ENCODE measurements at regions of chr2 and their contacts with region 1.

Region 1: DNA sequence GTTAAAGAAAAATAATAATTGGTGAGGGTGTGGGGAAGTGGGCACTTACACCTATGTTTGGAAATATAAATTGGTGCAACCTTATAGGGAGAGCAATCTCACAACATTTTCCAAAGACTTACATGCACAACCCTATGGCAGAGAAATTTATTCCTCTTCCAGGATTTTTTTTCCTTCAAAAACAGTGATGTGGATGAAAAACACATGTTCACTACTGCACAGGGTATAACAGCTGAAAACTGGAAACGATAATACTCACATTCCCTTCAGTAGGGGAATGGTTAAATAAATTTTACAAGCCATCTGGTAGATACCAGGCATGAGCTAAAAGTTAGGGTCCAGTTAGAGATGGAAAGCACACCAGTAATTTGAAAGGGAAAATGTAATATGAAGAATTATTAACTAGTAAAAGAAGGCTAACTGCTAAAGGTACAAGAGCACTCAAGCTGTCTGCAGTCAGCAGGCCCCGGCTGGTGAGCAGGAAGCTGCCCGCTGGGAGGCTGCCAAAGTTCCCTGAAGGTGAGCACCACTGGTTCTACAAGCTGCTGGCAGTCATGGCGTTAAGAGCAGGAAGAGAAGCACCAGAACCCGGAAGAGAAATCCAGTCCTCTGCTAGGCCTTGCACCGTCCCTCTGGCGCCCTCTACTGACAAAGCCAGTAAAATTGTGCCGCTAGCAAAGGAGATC is 28.4 kb upstream of the CASP8 start:
- DNase-seq: peak; percentile 97
- H3K4me3 Mint-ChIP-seq: peak overlapping the region; percentile 78
- H3K27ac Mint-ChIP-seq: peak overlapping the region; percentile 91
- H3K4me1 Mint-ChIP-seq: peaks cover 47% of the 10 kb centered on the region
- H3K27me3 Mint-ChIP-seq: no peaks in the 10 kb centered on the region

Region 2: DNA sequence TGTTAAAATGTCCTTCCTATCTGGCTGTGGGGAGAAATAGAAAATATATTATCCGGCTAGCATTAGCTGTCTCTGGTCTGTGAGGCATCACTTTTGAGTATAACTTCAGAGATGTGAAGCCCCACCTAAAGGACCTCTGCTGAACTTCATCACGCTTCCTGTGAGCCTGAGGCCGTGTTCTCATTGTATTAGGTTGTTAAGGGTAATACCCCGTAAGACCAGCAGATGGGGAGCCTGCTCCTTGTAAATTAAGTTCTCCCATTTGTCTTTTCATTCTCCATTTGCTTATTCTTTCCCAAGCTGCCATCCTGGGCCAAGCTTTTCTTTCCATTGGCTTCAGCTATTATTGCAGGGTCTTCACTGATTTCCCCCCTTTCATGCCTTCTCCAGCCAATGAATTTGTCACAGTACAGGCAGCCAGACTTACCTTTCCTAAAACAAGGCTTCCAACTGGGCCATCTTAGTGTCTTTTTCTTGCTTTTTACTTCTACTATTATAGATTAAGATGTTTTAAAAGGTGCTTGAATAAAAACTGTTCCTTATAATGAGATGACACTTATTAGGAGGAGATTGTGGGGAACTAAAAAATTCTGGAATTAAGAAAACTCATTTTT is 330.4 kb before region 1 on chr2:
- intact Hi-C with region 1: loop called (anchors 1 kb)
- DNase-seq: peak; percentile 92
- H3K4me3 Mint-ChIP-seq: no peak overlapping the region
- H3K27ac Mint-ChIP-seq: peak overlapping the region; percentile 61
- H3K4me1 Mint-ChIP-seq: peaks cover 19% of the 10 kb centered on the region
- H3K27me3 Mint-ChIP-seq: no peaks in the 10 kb centered on the region

Region 3: DNA sequence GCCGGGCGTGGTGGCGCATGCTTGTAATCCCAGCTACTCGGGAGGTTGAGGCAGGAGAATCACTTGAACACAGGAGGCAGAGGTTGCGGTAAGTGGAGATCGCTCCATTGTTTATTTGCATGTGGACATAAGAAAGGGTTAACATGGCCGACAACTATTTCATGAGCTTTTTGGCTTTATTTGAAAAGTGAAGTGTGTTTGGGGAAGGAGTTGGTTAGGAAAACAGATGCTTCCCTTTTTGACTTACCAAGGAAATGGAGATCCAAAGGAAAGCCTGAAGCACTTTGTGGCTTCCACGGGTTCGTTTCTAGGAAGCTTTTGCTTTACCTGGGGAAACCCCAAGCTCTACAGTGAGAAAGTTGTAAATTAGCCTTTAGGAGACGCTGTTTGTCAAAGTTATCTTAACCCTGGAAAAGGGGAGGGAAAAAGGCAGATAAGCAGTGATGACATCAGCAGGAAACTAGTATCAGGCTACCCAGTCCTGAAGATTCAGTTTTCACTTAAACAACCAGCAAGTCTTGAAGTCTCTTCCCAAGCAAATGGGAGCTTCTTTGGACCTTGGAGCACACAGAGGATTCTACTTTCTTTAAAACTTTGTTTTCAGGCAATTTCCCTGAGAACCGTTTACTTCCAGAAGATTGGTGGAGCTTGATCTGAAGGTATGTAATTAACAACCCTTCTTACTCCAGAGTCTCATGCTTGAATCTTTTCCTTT is 49.1 kb before region 1 on chr2 and contains the start of gene CASP10:
- intact Hi-C with region 1: loop called (anchors 1 kb)
- DNase-seq: peak; percentile 87
- H3K4me3 Mint-ChIP-seq: peak within 1 kb of the TSS; percentile 98
- H3K27ac Mint-ChIP-seq: peak within 1 kb of the TSS; percentile 95
- H3K4me1 Mint-ChIP-seq: peaks cover 49% of the 10 kb centered on the region
- H3K27me3 Mint-ChIP-seq: no peaks in the 10 kb centered on the region
- total RNA-seq, gene CASP10: 12.7 and 13.1 TPM in 2 replicates

Region 4: GRCh38 chr2:201279079-201279478 is 47.2 kb after region 1 on chr2:
- intact Hi-C with region 1: loop called (anchors 2 kb)
- DNase-seq: no peak
- H3K4me3 Mint-ChIP-seq: no peak overlapping the region
- H3K27ac Mint-ChIP-seq: peak overlapping the region; percentile 80
- H3K4me1 Mint-ChIP-seq: peaks cover 22% of the 10 kb centered on the region
- H3K27me3 Mint-ChIP-seq: no peaks in the 10 kb centered on the region

Region 5: GRCh38 chr2:201642579-201643215 is 410.8 kb after region 1 on chr2:
- intact Hi-C with region 1: loop called (anchors 2 kb)
- DNase-seq: peak; percentile 97
- H3K4me3 Mint-ChIP-seq: peak overlapping the region; percentile 84
- H3K27ac Mint-ChIP-seq: peak overlapping the region; percentile 87
- H3K4me1 Mint-ChIP-seq: peaks cover 14% of the 10 kb centered on the region
- H3K27me3 Mint-ChIP-seq: peaks cover 3% of the 10 kb centered on the region

Region 6: DNA sequence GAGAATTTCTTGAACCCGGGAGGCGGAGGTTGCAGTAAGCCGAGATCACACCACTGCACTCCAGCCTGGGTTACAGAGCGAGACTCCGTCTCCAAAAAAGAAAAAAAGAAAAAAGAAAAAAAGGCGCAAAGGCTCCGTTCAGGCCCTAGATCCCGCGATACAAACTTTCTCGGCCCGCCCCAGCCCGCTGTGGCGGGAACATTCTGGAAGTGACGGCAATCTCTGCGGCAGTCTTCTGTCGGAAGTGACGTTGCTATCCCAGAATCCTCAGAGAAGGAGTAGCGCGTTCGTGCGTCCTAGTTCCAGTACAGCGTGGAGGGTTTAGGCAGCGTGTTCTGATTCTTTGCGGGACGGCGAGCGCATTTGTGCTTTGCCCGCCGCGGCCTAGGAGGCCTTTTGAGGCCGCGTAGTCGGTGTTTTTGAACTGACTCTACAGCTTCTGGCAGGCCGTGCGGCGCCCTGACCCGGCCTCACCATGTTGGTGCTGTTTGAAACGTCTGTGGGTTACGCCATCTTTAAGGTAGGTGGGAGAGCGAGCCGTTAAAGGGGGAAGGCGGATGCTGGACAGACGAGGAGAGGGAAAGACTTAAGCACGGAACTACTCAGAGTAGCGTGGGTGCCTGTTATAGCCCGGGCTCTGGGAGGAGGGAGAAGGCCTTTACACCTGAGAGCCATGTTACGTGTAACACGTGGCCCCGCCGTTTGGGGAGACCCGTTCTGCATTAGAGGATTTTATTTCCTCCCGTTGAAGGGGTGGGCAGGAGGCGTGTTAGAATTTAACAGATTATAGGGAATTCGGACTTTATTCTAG is 1033.7 kb after region 1 on chr2 and contains the start of gene NOP58:
- intact Hi-C with region 1: loop called (anchors 10 kb)
- DNase-seq: peak; percentile 98
- H3K4me3 Mint-ChIP-seq: peak within 1 kb of the TSS; percentile 65
- H3K27ac Mint-ChIP-seq: peak within 1 kb of the TSS; percentile 80
- H3K4me1 Mint-ChIP-seq: peaks cover 19% of the 10 kb centered on the region
- H3K27me3 Mint-ChIP-seq: no peaks in the 10 kb centered on the region
- total RNA-seq, gene NOP58: 221 and 228 TPM in 2 replicates